SK-N-SH (cell line): ENCODE measurements at regions of chr7 and their contacts with region 1.

Region 1: DNA sequence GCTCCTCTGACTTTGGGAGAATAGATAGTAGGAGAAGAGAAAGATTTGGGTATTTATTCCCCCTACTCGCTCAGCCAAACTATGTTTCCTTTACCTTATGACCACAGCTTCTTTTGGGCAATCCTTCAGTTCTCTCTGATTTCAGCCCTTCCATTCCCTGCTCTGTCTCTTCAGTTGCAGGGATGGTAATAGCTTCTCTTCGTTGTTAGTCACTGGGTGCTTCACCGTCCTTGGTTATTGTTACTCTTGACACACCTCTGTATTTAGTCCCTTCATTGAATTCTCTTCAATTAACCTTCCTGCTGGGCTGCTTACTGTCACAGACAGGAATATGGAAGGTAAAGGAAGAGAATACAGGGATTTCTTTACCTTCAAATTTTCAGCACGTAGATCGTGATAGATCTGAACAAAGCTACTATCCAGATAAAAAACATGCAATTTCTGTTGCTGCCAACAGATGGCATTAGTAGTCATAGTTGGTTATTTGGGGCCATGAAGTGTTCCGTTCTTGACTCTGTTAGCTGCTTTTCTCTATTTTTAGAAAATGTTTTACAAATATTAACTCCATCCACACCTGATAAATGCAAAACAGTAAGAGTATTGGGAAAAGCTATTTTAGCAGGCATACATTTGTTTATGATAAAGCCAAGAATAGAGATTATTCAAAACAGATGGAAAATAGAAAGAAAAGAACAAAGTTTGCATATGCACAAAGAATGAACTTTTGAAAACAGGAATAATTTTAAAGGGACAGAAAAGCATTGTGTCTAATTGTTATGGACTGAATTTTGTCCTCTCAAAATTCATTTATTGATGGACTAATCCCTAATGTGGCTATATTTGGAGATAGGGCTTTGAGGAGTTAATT is 14.0 kb upstream of the PTTG1IP2 start:
- DNase-seq: peak; percentile 61
- H3K4me3 ChIP-seq: peak overlapping the region; percentile 9 to 15; a peak in 1 of 4 replicates
- H3K27ac ChIP-seq: no peak overlapping the region
- H3K4me1 ChIP-seq: peaks cover 0 to 2% of the 10 kb centered on the region in 2 experiments; a peak in 1 of 4 replicates
- H3K27me3 ChIP-seq: no peaks in the 10 kb centered on the region
- CTCF ChIP-seq: peak; percentile 98
- EP300 ChIP-seq: no peak
- RAD21 ChIP-seq: peak; percentile 89

Region 2: GRCh38 chr7:90472805-90473540 is 17.6 kb after region 1 on chr7:
- CTCF ChIA-PET with region 1: interaction called, 30 read pairs
- POLR2A ChIA-PET with region 1: no interaction called
- DNase-seq: no peak
- H3K4me3 ChIP-seq: no peak overlapping the region
- H3K27ac ChIP-seq: no peak overlapping the region
- H3K4me1 ChIP-seq: peaks cover 0 to 10% of the 10 kb centered on the region in 2 experiments; a peak in 2 of 4 replicates
- H3K27me3 ChIP-seq: no peaks in the 10 kb centered on the region
- CTCF ChIP-seq: no peak
- EP300 ChIP-seq: no peak
- RAD21 ChIP-seq: no peak

Region 3: DNA sequence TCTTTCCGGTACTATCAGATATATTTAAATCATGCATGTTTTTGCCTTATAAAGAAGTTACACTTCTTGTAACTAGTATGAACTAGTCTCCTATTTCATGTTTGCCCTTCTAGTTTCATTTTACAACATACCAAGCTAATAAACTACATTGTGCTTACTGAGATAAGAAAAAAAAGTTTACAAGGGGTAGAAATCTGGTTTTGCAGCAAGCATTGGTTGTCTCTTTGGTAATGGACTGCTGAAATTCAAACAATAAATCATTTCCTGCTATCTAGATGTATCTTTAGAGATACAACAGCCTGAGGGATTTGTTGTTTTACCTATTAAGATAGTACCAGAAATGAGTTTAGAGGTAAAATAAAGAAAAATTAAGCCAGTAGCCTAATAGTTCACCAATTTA is 32.8 kb after region 1 on chr7:
- CTCF ChIA-PET with region 1: interaction called, 10 read pairs
- POLR2A ChIA-PET with region 1: no interaction called
- DNase-seq: peak; percentile 19
- H3K4me3 ChIP-seq: no peak overlapping the region
- H3K27ac ChIP-seq: no peak overlapping the region
- H3K4me1 ChIP-seq: peaks cover 0 to 6% of the 10 kb centered on the region in 2 experiments; a peak in 1 of 4 replicates
- H3K27me3 ChIP-seq: no peaks in the 10 kb centered on the region
- CTCF ChIP-seq: no peak
- EP300 ChIP-seq: no peak; a peak in 1 of 4 replicates
- RAD21 ChIP-seq: no peak

Region 4: DNA sequence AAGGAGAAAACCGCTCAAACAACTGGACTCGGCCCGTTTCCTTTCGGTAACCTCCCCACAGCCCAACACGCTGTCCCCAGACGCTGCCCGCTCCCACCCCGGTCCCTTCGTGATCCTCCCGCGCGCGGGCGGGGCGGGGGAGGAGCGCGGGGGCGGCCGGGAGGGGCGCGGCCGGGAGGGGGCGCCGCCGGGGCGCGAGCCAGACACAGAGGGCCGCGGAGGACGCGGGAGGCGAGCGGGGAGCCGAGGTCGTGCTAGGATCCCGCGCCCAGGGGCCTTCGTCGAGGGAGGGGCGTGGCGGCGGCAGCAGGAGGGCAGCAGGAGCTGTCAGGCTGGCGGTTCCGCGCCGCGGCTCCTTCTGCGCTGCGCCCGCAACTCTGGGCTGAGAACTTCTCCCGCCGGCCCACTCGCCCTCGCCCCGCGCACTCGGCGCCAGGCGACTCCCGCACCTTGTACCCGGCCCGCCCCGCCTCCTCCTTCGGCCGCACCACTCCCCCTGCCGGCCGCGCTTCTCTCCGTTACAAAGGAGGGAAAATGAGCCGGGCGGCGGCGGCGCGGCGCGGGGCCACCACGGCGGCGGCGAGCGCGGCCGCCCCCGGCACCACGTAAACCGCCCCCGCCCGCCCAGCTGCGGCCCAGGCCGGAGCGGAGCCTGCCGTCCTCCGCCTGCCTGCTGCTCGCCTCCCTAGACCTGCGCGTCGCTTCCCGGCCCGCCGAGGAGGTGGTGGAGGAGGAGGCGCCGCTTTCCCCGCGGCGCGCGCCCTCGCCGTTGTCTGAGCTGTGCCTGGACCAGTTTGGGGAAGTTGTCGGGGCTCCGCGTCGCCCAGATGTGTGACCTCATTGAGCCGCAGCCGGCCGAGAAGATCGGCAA is 140.6 kb after region 1 on chr7 and contains the start of gene CDK14:
- CTCF ChIA-PET with region 1: interaction called, 44 read pairs
- POLR2A ChIA-PET with region 1: no interaction called
- DNase-seq: peak; percentile 96
- H3K4me3 ChIP-seq: peak within 1 kb of the TSS; percentile 96 to 99
- H3K27ac ChIP-seq: peak within 1 kb of the TSS; percentile 81 to 85
- H3K4me1 ChIP-seq: peaks cover 21 to 32% of the 10 kb centered on the region in 2 experiments
- H3K27me3 ChIP-seq: no peaks in the 10 kb centered on the region
- CTCF ChIP-seq: peak; percentile 48
- EP300 ChIP-seq: peak in 1 of 2 experiments; percentile 44; a peak in 1 of 4 replicates
- RAD21 ChIP-seq: no peak
- polyA plus RNA-seq, gene CDK14: 13.9 and 15.6 TPM in 2 replicates